Aorta (tissue), 5 donors: ENCODE measurements at regions of chr3 and their contacts with region 1.

Region 1: GRCh38 chr3:169002689-169003088 is 660.8 kb downstream of the MECOM start:
- DNase-seq: no peak
- ATAC-seq: no peak
- H3K4me3 ChIP-seq: no peak overlapping the region
- H3K27ac ChIP-seq: no peak overlapping the region
- H3K4me1 ChIP-seq: no peaks in the 10 kb centered on the region
- H3K27me3 ChIP-seq: no peaks in the 10 kb centered on the region

Region 2: GRCh38 chr3:168812234-168812633 is 190.5 kb before region 1 on chr3:
- intact Hi-C with region 1: no loop called
- DNase-seq: no peak
- ATAC-seq: no peak
- H3K4me3 ChIP-seq: no peak overlapping the region
- H3K27ac ChIP-seq: no peak overlapping the region
- H3K4me1 ChIP-seq: no peaks in the 10 kb centered on the region
- H3K27me3 ChIP-seq: no peaks in the 10 kb centered on the region

Region 3: GRCh38 chr3:168952551-168952950 is 50.1 kb before region 1 on chr3:
- intact Hi-C with region 1: loop called in 1 of 2 experiments (anchors 10 kb)
- DNase-seq: no peak
- ATAC-seq: no peak
- H3K4me3 ChIP-seq: peak overlapping the region; percentile 2 to 64
- H3K27ac ChIP-seq: no peak overlapping the region
- H3K4me1 ChIP-seq: no peaks in the 10 kb centered on the region
- H3K27me3 ChIP-seq: no peaks in the 10 kb centered on the region

Region 4: DNA sequence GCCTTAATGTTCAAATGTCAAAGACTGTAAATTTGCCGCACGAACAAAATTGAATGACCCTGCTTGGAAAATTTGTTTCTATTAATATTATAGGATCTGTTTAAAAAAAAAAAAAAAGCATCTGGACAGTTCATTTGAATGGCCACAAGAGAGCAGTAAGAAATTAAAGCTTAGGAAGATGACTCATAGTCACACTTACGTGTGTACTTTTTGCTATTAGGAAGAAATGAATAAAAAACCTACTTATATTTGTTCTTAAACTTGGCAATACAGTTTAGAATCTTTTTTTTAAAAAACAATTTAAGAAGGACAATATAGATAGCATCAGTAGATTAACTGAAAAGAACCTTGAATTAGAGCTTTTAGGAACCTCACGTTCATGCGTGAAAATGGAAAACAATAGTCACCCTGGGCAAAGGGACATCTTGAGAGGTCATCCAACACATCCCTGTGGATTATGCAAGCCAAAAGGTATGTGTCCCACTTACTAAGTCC is 39.0 kb after region 1 on chr3:
- intact Hi-C with region 1: no loop called
- DNase-seq: no peak
- ATAC-seq: peak; percentile 79
- H3K4me3 ChIP-seq: no peak overlapping the region
- H3K27ac ChIP-seq: no peak overlapping the region
- H3K4me1 ChIP-seq: no peaks in the 10 kb centered on the region
- H3K27me3 ChIP-seq: no peaks in the 10 kb centered on the region